GM12878 (cell line): ENCODE measurements at regions of chr6 and their contacts with region 1.

Region 1: DNA sequence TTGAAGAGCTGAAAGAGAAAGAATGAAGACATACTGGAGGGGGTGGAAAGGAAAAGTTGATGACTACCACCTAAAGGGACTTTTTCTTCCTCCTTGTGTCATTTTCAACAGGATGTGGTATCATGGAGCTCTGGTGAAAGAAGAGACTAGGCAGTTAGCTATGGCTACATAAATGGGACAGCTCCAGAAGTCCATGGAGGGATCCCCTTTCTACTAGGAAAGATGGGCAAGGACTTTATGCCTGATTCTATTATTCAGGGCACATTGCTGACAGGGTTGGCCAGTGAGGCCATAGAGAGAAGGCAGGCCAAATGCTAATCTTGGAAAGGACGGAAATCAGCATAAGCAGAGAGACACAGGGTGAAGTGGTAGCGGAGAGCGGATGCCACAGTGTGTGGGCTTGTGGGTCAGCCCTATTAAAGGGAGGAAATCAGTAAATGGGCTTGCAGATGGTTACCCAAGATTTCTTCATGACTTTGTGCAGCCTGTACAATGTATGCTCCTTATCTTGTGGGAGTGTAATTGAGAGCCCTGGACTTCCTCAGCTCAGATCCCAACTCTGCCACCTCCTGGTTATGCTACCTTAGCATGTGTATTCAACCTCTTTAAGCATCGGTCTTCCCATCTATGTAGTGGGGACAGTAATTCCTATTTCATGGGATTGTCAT is 77.4 kb upstream of the TMEM170B start:
- DNase-seq: peak; percentile 75
- ATAC-seq: peak; percentile 65
- H3K4me3 ChIP-seq: peak overlapping the region; percentile 28; the same call in 1 of the 2 replicates
- H3K27ac ChIP-seq: peak overlapping the region; percentile 96
- H3K4me1 ChIP-seq: peaks cover 40% of the 10 kb centered on the region
- H3K27me3 ChIP-seq: no peaks in the 10 kb centered on the region
- CTCF ChIP-seq: peak in 2 of 3 experiments; percentile 17 to 21; a peak in 3 of 6 replicates
- EP300 ChIP-seq: 0 out of 4 replicates have a peak, but pooled peaks of 1 of the 2 experiments have one; percentile 7
- POLR2A ChIP-seq: 0 out of 2 replicates have a peak, but pooled peaks have one; percentile 37
- RAD21 ChIP-seq: no peak; the same call in 1 of the 2 replicates

Region 2: DNA sequence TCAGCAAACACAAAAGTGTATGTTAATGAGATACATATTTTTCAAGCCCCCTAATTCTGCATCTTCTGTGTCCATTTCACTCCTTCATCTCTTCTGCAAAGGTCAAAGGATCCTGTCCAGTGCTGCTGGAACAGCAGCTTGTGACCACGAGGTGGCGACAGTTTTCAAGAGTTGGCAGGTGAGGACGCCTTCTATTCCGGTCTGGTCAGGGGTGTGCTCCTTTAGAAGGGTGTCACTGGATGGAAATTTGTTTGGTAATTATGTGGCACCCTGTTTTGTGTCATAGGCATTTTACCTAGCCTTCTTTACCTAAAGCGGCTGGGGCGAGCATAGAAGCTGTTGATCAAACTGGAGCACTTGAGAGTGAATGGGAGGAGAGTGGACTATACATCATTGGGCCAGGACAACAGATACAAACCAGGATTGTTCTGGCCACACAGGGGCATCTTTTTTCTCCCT is 315.7 kb before region 1 on chr6:
- CTCF ChIA-PET with region 1: no interaction called
- POLR2A ChIA-PET with region 1: no interaction called
- RAD21 ChIA-PET with region 1: interaction called, 10 read pairs
- SMC1A ChIA-PET with region 1: interaction called, 3 read pairs
- in situ Hi-C with region 1: no loop called
- intact Hi-C with region 1: no loop called
- DNase-seq: peak; percentile 49
- ATAC-seq: peak; percentile 99
- H3K4me3 ChIP-seq: no peak overlapping the region
- H3K27ac ChIP-seq: no peak overlapping the region
- H3K4me1 ChIP-seq: peaks cover 3% of the 10 kb centered on the region; the same call in 1 of the 2 replicates
- H3K27me3 ChIP-seq: no peaks in the 10 kb centered on the region
- CTCF ChIP-seq: peak; percentile 93 to 97 (median 95)
- EP300 ChIP-seq: no peak
- POLR2A ChIP-seq: no peak
- RAD21 ChIP-seq: peak; percentile 100

Region 3: GRCh38 chr6:11324453-11325015 is 135.6 kb before region 1 on chr6:
- CTCF ChIA-PET with region 1: no interaction called
- POLR2A ChIA-PET with region 1: interaction called, 16 read pairs
- RAD21 ChIA-PET with region 1: interaction called, 44 read pairs
- SMC1A ChIA-PET with region 1: interaction called, 37 read pairs
- in situ Hi-C with region 1: no loop called
- intact Hi-C with region 1: loop called (anchors 1 kb)
- DNase-seq: peak; percentile 61
- ATAC-seq: peak; percentile 71
- H3K4me3 ChIP-seq: no peak overlapping the region
- H3K27ac ChIP-seq: peak overlapping the region; percentile 45
- H3K4me1 ChIP-seq: peaks cover 41% of the 10 kb centered on the region
- H3K27me3 ChIP-seq: no peaks in the 10 kb centered on the region
- CTCF ChIP-seq: no peak
- EP300 ChIP-seq: peak; percentile 57 to 76; a peak in 2 of 4 replicates
- POLR2A ChIP-seq: no peak
- RAD21 ChIP-seq: 0 out of 2 replicates have a peak, but pooled peaks have one; percentile 13

Region 4: DNA sequence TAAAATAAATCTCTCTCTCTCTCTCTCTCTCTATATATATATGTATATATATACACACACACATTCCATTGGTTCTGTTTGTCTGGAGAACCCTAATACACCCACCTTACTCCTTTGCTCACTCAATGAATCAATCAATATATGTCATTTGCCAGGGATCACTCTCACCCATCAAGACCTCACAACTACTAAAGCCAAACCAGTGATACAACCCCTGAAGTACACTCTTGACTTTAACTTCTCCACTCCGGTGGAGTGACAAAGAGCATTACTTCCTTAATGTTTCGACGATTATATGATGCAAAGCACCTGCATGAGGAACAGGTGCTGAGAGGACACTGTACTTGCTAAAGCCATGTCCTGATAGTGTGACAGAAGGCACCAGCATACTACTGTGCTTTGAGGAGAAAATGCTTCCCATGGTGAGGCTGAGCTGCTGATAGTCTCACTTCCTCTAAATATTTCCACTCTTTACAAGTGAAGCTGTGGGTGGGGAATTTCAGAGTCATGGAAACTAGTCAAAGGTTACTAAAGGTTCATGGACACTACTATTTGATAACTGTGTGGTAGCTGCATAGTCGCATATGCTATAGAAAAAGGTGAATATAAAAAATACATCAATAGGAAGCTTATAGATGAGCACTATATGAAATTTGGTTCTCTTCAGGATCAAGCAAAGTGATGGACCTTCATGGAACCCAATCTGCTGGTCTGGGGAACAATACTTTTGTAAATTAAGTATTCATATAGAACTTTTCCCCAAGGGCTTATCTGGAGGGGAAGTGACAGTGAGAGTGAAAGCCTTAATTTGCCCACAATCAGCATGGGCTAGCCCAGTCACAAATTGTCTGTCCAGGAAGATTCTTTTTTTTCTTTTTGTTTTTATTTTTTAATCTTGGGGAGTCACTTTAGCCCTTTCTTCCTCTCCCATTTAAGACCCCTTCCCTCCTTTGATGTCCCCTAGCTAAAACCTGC is 85.8 kb before region 1 on chr6:
- CTCF ChIA-PET with region 1: interaction called, 78 read pairs
- POLR2A ChIA-PET with region 1: interaction called, 22 read pairs
- RAD21 ChIA-PET with region 1: interaction called, 384 read pairs
- SMC1A ChIA-PET with region 1: interaction called, 249 read pairs
- in situ Hi-C with region 1: no loop called
- intact Hi-C with region 1: loop called (anchors 2 kb)
- DNase-seq: peak; percentile 96
- ATAC-seq: peak; percentile 85
- H3K4me3 ChIP-seq: 0 out of 2 replicates have a peak overlapping the region, but pooled peaks have one; percentile 44
- H3K27ac ChIP-seq: peak overlapping the region; percentile 89
- H3K4me1 ChIP-seq: peaks cover 44% of the 10 kb centered on the region
- H3K27me3 ChIP-seq: no peaks in the 10 kb centered on the region
- CTCF ChIP-seq: no peak
- EP300 ChIP-seq: peak; percentile 83 to 95
- POLR2A ChIP-seq: peak; percentile 43; the same call in 1 of the 2 replicates
- RAD21 ChIP-seq: peak; percentile 25

Region 5: DNA sequence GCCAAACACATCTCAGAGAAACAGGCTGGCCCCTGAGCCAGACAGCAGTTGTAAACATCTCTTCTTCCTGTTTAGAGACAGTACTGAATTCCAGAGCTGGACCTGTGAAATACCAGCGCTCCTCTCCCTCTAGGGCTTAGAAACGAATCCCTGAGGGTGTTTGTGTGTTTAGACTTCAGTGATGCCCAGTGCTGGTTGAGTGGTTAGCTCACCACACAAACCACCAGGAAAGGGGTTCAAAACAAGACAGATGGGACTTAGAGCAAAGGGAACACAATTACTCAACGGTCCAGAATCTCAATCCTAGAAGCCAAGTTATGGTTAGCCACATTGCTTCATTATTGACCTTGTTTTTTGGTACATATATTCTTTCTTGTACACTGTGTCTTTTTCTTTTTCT is 31.2 kb before region 1 on chr6:
- CTCF ChIA-PET with region 1: interaction called, 15 read pairs
- POLR2A ChIA-PET with region 1: interaction called, 7 read pairs
- RAD21 ChIA-PET with region 1: interaction called, 71 read pairs
- SMC1A ChIA-PET with region 1: interaction called, 110 read pairs
- in situ Hi-C with region 1: no loop called
- intact Hi-C with region 1: loop called (anchors 1 kb)
- DNase-seq: peak; percentile 83
- ATAC-seq: peak; percentile 81
- H3K4me3 ChIP-seq: no peak overlapping the region
- H3K27ac ChIP-seq: peak overlapping the region; percentile 51; the same call in 1 of the 2 replicates
- H3K4me1 ChIP-seq: peaks cover 33% of the 10 kb centered on the region
- H3K27me3 ChIP-seq: no peaks in the 10 kb centered on the region
- CTCF ChIP-seq: no peak
- EP300 ChIP-seq: peak in 1 of 2 experiments; percentile 65; a peak in 2 of 4 replicates
- POLR2A ChIP-seq: no peak
- RAD21 ChIP-seq: no peak

Region 6: GRCh38 chr6:11514672-11515071 is 54.5 kb after region 1 on chr6:
- CTCF ChIA-PET with region 1: interaction called, 9 read pairs
- POLR2A ChIA-PET with region 1: interaction called, 6 read pairs
- RAD21 ChIA-PET with region 1: interaction called, 22 read pairs
- SMC1A ChIA-PET with region 1: interaction called, 24 read pairs
- in situ Hi-C with region 1: no loop called
- intact Hi-C with region 1: loop called (anchors 1 kb)
- DNase-seq: peak; percentile 87
- ATAC-seq: peak; percentile 87
- H3K4me3 ChIP-seq: no peak overlapping the region
- H3K27ac ChIP-seq: peak overlapping the region; percentile 97
- H3K4me1 ChIP-seq: peaks cover 40% of the 10 kb centered on the region
- H3K27me3 ChIP-seq: no peaks in the 10 kb centered on the region
- CTCF ChIP-seq: no peak
- EP300 ChIP-seq: peak in 1 of 2 experiments; percentile 89; a peak in 1 of 4 replicates
- POLR2A ChIP-seq: no peak
- RAD21 ChIP-seq: no peak

Region 7: GRCh38 chr6:12992770-12993169 is 1532.6 kb after region 1 on chr6:
- CTCF ChIA-PET with region 1: no interaction called
- POLR2A ChIA-PET with region 1: no interaction called
- RAD21 ChIA-PET with region 1: no interaction called
- SMC1A ChIA-PET with region 1: no interaction called
- in situ Hi-C with region 1: no loop called
- intact Hi-C with region 1: no loop called
- DNase-seq: no peak
- ATAC-seq: no peak
- H3K4me3 ChIP-seq: no peak overlapping the region
- H3K27ac ChIP-seq: no peak overlapping the region
- H3K4me1 ChIP-seq: no peaks in the 10 kb centered on the region
- H3K27me3 ChIP-seq: no peaks in the 10 kb centered on the region; a peak in 2 of 4 replicates
- CTCF ChIP-seq: no peak
- EP300 ChIP-seq: no peak
- POLR2A ChIP-seq: no peak
- RAD21 ChIP-seq: no peak